Activated CD8-positive, alpha-beta memory T cell treated with anti-CD3 and anti-CD28 coated beads, Interleukin-2, amount 10 ng/mL, durations not matched to agents 7 days and 5 days (primary cell): ENCODE measurements at regions of chr3 and their contacts with region 1.

Region 1: GRCh38 chr3:172622916-172623700 is 87.8 kb downstream of the NCEH1 start:
- DNase-seq: peak; percentile 52
- ATAC-seq: peak; percentile 65
- H3K4me3 Mint-ChIP-seq: peak overlapping the region; percentile 12
- H3K27ac Mint-ChIP-seq: no peak overlapping the region
- H3K4me1 Mint-ChIP-seq: peaks cover 7% of the 10 kb centered on the region
- H3K27me3 Mint-ChIP-seq: no peaks in the 10 kb centered on the region

Region 2: GRCh38 chr3:172607305-172608121 is 15.6 kb before region 1 on chr3:
- CTCF ChIA-PET with region 1: interaction called, 11 read pairs
- DNase-seq: peak; percentile 33
- ATAC-seq: no peak
- H3K4me3 Mint-ChIP-seq: no peak overlapping the region
- H3K27ac Mint-ChIP-seq: no peak overlapping the region
- H3K4me1 Mint-ChIP-seq: peaks cover 12% of the 10 kb centered on the region
- H3K27me3 Mint-ChIP-seq: no peaks in the 10 kb centered on the region

Region 3: GRCh38 chr3:172635588-172635987 is 12.5 kb after region 1 on chr3:
- CTCF ChIA-PET with region 1: interaction called, 14 read pairs
- DNase-seq: no peak
- ATAC-seq: peak; percentile 98
- H3K4me3 Mint-ChIP-seq: no peak overlapping the region
- H3K27ac Mint-ChIP-seq: peak overlapping the region; percentile 30
- H3K4me1 Mint-ChIP-seq: peaks cover 16% of the 10 kb centered on the region
- H3K27me3 Mint-ChIP-seq: no peaks in the 10 kb centered on the region

Region 4: GRCh38 chr3:172648747-172649146 is 25.6 kb after region 1 on chr3:
- CTCF ChIA-PET with region 1: interaction called, 10 read pairs
- DNase-seq: no peak
- ATAC-seq: no peak
- H3K4me3 Mint-ChIP-seq: no peak overlapping the region
- H3K27ac Mint-ChIP-seq: no peak overlapping the region
- H3K4me1 Mint-ChIP-seq: no peaks in the 10 kb centered on the region
- H3K27me3 Mint-ChIP-seq: no peaks in the 10 kb centered on the region